ENCODE measurements at regions of chr7 and their contacts with region 1.

Region 1: DNA sequence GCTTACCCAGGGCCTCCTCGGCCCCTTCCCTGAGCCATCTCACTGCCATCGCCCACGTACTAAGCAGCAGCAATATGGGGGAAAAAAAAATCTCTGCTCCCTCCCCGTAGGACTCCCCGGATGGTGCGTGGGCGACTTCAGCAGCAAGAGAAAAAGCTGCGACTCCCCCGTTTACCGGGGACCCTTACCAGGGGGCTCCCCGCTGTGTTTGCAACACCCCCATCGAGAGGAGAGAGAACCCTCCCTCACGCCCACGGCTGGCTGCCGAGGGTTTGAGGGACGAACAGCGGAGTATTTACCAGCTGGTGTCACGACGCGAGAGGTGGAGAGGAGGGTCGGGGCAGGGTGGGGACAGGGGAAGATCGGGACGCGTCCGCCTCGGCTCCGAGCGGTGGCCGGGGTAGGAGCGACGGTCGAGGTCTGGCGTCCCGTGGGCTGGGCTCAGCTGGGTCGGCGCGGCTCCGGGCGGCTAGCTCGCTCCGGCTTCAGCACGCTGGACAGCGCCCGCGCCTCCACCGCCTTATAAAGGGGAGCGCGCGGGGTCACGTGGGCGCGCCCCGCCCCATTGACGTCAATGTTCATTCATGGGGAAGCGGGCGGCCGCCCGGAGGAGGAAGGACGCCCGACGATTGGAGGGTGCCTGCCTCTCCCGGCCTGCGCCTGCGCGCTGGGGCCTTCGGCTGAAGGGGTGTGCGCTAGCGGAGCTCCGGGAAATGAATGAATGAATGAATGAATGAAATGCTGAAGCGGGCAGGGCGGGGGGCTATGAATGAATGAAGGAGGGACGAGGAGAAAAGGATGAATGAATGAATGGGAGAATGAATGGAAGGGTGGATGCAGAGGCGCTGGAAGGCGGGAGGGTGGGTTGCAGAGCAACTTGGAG is at the start of gene VGF:
- DNase-seq: peak; percentile 96
- H3K4me3 Mint-ChIP-seq: peak within 1 kb of the TSS; percentile 74
- H3K27ac Mint-ChIP-seq: no peak within 1 kb of the TSS
- H3K4me1 Mint-ChIP-seq: peaks cover 41% of the 10 kb centered on the region
- H3K27me3 Mint-ChIP-seq: peaks cover 52% of the 10 kb centered on the region
- CTCF ChIP-seq: no peak
- total RNA-seq, gene VGF: 11.2 and 12.8 TPM in 2 replicates

Region 2: DNA sequence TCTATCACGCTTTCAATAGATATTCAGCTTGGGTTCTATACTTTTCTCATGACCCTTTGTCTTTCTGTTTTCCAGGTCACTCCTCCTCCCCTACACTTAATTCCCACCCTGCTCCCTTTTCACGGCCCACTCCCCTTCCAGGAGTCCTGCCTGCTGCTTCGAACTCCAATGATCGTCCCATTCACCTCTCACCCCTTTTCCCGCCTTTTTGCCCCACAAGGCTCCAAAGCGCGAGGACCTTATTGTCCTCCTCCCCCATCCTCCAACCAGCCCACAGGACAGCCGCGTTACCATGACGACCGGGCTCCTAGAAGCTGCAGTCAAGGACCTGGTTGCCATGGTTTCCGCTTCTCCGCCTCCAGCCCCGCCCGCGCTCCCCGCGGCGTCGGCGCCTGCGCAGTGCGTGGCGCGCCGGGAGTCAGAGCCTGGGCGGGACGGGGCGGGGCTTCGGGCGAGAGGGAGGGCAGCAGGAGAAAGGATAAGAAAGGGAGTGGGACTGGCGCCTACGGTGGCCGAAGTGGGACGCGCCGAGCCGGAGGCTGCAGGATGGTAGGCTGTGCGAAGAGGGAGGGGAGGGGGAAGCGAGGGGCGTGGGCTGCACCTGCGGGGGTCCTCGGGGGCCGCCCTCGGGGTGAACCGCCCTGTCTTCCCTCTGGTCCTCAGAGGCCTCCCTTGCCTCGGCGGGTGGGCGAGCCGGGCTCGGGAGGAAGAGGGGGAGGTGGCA is 11.2 kb before region 1 on chr7 and contains the start of gene AP1S1:
- CTCF ChIA-PET with region 1: interaction called, 9 read pairs
- POLR2A ChIA-PET with region 1: interaction called, 28 read pairs
- intact Hi-C with region 1: no loop called
- DNase-seq: peak; percentile 93
- H3K4me3 Mint-ChIP-seq: peak within 1 kb of the TSS; percentile 82
- H3K27ac Mint-ChIP-seq: peak within 1 kb of the TSS; percentile 87
- H3K4me1 Mint-ChIP-seq: peaks cover 23% of the 10 kb centered on the region
- H3K27me3 Mint-ChIP-seq: peaks cover 17% of the 10 kb centered on the region
- CTCF ChIP-seq: no peak
- total RNA-seq, gene AP1S1: 72.1 and 72.5 TPM in 2 replicates

Region 3: GRCh38 chr7:101507791-101508252 is 342.5 kb after region 1 on chr7:
- CTCF ChIA-PET with region 1: no interaction called
- POLR2A ChIA-PET with region 1: no interaction called
- intact Hi-C with region 1: no loop called
- DNase-seq: peak; percentile 70
- H3K4me3 Mint-ChIP-seq: no peak overlapping the region
- H3K27ac Mint-ChIP-seq: no peak overlapping the region
- H3K4me1 Mint-ChIP-seq: no peaks in the 10 kb centered on the region
- H3K27me3 Mint-ChIP-seq: peaks cover 55% of the 10 kb centered on the region
- CTCF ChIP-seq: peak; percentile 85

Region 4: GRCh38 chr7:101538596-101539459 is 373.5 kb after region 1 on chr7:
- CTCF ChIA-PET with region 1: no interaction called
- POLR2A ChIA-PET with region 1: no interaction called
- intact Hi-C with region 1: no loop called
- DNase-seq: peak; percentile 61
- H3K4me3 Mint-ChIP-seq: no peak overlapping the region
- H3K27ac Mint-ChIP-seq: no peak overlapping the region
- H3K4me1 Mint-ChIP-seq: no peaks in the 10 kb centered on the region
- H3K27me3 Mint-ChIP-seq: no peaks in the 10 kb centered on the region
- CTCF ChIP-seq: peak; percentile 91

Measured in MCF 10A (cell line).